Activated CD8-positive, alpha-beta T cell treated with anti-CD3 and anti-CD28 coated beads for 36 hours (primary cell): ENCODE measurements at regions of chr1 and their contacts with region 1.

Region 1: GRCh38 chr1:53681977-53682685 is 56.8 kb downstream of the GLIS1 start:
- DNase-seq: peak; percentile 59
- ATAC-seq: peak; percentile 79
- H3K4me3 Mint-ChIP-seq: no peak overlapping the region
- H3K27ac Mint-ChIP-seq: no peak overlapping the region
- H3K4me1 Mint-ChIP-seq: peaks cover 7% of the 10 kb centered on the region
- H3K27me3 Mint-ChIP-seq: peaks cover 7% of the 10 kb centered on the region
- CTCF ChIP-seq: peak; percentile 65

Region 2: DNA sequence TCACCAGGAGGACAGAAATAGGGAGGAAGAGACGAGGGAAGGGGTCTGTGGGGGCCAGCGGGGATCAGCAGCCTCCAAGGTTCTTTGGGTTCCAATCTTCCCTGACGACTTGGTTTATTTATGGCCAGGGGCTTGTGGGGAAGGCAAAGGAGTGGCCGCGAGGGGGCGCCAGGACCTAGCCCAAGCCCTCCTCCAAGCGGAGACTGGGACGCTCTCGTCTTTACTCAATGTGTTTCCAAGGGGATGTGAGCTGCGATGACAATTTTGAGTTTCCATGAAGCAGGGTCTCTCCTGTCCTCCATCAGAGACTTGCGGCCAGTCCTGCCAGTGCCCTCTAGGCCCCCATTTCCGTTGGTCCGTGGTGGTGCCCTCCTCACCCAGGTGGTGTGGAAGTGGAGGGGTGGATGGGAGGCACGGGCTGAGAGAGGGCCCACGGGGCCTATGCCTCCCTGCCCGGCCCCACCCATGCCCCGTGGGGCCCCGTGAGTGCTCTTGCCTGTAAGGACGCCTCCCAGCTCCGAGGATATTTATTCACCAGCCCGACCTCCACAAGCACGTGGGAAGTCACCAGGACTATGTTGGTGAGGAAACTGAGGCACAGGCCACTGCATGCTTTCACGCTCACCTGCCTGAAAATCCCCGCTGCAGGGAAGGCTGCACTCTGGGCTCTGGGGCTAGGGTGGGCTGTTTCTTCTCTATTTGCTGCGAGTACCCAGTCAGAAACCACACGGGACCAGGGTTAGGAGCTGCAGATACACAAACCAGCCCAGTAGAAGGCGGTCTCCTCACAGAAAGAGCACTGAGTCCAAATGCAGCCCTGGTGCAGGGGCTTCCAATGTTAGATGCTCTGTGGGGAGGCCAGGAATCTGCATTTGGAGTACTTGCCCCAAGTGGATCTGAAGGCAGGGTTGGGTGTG is 196.4 kb before region 1 on chr1:
- CTCF ChIA-PET with region 1: interaction called, 18 read pairs
- POLR2A ChIA-PET with region 1: interaction called, 3 read pairs
- intact Hi-C with region 1: loop called (anchors 5 kb)
- DNase-seq: peak; percentile 87
- ATAC-seq: peak; percentile 80
- H3K4me3 Mint-ChIP-seq: no peak overlapping the region
- H3K27ac Mint-ChIP-seq: no peak overlapping the region
- H3K4me1 Mint-ChIP-seq: no peaks in the 10 kb centered on the region
- H3K27me3 Mint-ChIP-seq: peaks cover 9% of the 10 kb centered on the region
- CTCF ChIP-seq: peak; percentile 80

Region 3: GRCh38 chr1:53781654-53782053 is 99.5 kb after region 1 on chr1:
- CTCF ChIA-PET with region 1: no interaction called
- POLR2A ChIA-PET with region 1: no interaction called
- intact Hi-C with region 1: no loop called
- DNase-seq: no peak
- ATAC-seq: no peak
- H3K4me3 Mint-ChIP-seq: no peak overlapping the region
- H3K27ac Mint-ChIP-seq: peak overlapping the region; percentile 30
- H3K4me1 Mint-ChIP-seq: peaks cover 11% of the 10 kb centered on the region
- H3K27me3 Mint-ChIP-seq: no peaks in the 10 kb centered on the region
- CTCF ChIP-seq: no peak